ENCODE measurements at regions of chr11 and their contacts with region 1.

Region 1: GRCh38 chr11:19553683-19554333 is 158.8 kb upstream of the NAV2 start:
- DNase-seq: peak; percentile 55
- H3K27ac ChIP-seq: no peak overlapping the region
- CTCF ChIP-seq: peak; percentile 82

Region 2: DNA sequence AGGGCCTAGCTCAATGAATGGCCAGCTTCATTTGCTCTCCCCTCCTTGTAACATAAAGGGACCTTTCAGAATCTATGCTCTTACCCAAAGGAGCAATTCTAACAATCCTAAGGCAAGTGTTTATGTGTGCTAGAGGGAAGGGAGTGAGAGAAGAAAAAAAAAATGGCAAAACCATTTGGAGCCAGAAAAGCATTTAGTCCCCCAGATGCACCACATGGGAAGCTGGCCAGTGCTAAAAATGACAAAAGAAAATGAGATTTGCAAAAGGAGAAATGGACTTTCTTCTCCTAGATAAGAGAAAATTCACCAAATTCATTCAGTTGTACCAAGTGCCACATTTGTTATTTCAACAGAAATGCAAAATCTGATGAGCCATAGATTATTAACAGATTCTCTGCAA is 1593.7 kb before region 1 on chr11:
- CTCF ChIA-PET with region 1: interaction called, 10 read pairs
- POLR2A ChIA-PET with region 1: no interaction called
- DNase-seq: no peak
- H3K27ac ChIP-seq: no peak overlapping the region
- CTCF ChIP-seq: no peak

Region 3: GRCh38 chr11:19259487-19260345 is 294.1 kb before region 1 on chr11:
- CTCF ChIA-PET with region 1: interaction called, 27 read pairs
- POLR2A ChIA-PET with region 1: no interaction called
- DNase-seq: peak; percentile 41
- H3K27ac ChIP-seq: no peak overlapping the region
- CTCF ChIP-seq: peak; percentile 93

Region 4: GRCh38 chr11:19742588-19743292 is 188.9 kb after region 1 on chr11:
- CTCF ChIA-PET with region 1: interaction called, 13 read pairs
- POLR2A ChIA-PET with region 1: no interaction called
- DNase-seq: peak; percentile 53
- H3K27ac ChIP-seq: no peak overlapping the region
- CTCF ChIP-seq: peak; percentile 83

Region 5: DNA sequence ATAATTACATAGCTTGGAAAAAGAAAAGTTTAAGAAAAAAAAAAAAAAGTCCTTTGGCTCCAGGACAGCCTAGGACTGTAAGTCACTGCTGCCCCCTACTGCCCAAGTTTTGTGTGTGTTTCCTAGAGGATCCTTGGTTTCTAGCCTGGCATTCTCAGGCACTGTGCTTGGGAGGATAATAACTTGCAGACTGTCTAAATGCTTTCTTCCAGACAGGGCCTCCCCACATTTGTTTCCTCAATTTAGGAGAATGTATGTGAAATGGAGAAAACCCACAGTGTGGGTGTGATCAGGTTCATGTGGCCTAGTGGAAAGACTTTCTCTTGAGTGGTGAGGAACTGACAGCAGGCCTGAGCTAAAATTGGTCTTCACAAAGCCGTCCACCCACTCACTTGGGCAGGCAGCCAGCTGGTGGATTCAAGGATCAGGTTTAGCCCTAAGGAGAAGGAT is 349.8 kb after region 1 on chr11:
- CTCF ChIA-PET with region 1: interaction called, 10 read pairs
- POLR2A ChIA-PET with region 1: no interaction called
- DNase-seq: peak; percentile 65
- H3K27ac ChIP-seq: no peak overlapping the region
- CTCF ChIP-seq: peak; percentile 86

Measured in RWPE1 (cell line).